Right ventricle myocardium inferior (tissue), 1 donor: ENCODE measurements at regions of chr14 and their contacts with region 1.

Region 1: GRCh38 chr14:104723648-104724406 is at the start of gene ADSS1:
- DNase-seq: peak; percentile 92
- ATAC-seq: peak; percentile 62
- total RNA-seq, gene ADSS1: 191 TPM

Region 2: GRCh38 chr14:104536942-104537612 is 186.8 kb before region 1 on chr14:
- intact Hi-C with region 1: no loop called
- DNase-seq: no peak
- ATAC-seq: no peak

Region 3: GRCh38 chr14:104582660-104583059 is 141.2 kb before region 1 on chr14:
- intact Hi-C with region 1: loop called (anchors 1 kb)
- DNase-seq: peak; percentile 88
- ATAC-seq: peak; percentile 70

Region 4: GRCh38 chr14:104752735-104753531 is 29.1 kb after region 1 on chr14 and contains the start of gene SIVA1:
- intact Hi-C with region 1: loop called (anchors 2 kb)
- DNase-seq: peak; percentile 100
- ATAC-seq: peak; percentile 97
- total RNA-seq, gene SIVA1: 54.4 TPM

Region 5: DNA sequence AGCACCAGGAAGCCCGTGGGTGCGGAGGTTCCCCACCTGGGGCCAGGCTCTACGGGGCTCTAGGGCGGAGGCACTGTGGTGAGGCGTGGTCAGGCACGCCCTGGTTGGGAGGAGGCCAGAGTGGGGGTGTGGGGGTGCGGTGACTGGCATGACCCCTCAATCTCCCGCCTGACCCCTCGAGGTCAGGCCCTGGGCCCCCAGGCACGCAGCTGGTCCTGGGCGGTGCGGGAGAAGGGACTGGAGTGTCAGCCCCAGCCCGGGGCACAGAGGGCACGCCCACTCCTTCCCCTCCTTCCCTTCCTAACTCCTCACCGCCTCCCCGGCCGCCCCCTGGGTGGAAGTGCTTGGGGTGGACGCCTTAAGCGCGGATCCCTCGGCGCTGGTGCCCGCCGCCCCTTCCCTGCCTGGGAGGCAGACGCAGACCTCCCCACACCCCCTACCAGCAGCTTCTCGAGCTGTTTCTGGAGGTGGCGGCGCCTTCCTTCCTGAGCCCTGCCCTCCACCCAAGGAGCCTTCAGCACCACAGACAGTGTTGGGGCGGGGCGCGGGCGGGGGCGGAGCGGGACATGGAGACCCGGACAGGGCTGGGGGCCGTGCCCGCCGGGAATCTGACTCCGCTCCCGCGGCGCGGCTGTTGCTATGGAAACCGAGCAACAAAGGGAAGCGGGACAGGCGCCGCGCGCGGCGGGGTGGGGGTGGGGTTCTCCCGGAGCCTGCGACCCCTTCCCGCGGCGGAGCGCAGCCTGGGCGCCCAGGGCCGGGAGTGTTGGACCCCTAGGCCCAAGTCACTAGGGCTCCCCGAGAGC is 750.1 kb after region 1 on chr14:
- intact Hi-C with region 1: loop called (anchors 10 kb)
- DNase-seq: peak; percentile 97
- ATAC-seq: peak; percentile 40